ENCODE measurements at regions of chr1 and their contacts with region 1.

Region 1: DNA sequence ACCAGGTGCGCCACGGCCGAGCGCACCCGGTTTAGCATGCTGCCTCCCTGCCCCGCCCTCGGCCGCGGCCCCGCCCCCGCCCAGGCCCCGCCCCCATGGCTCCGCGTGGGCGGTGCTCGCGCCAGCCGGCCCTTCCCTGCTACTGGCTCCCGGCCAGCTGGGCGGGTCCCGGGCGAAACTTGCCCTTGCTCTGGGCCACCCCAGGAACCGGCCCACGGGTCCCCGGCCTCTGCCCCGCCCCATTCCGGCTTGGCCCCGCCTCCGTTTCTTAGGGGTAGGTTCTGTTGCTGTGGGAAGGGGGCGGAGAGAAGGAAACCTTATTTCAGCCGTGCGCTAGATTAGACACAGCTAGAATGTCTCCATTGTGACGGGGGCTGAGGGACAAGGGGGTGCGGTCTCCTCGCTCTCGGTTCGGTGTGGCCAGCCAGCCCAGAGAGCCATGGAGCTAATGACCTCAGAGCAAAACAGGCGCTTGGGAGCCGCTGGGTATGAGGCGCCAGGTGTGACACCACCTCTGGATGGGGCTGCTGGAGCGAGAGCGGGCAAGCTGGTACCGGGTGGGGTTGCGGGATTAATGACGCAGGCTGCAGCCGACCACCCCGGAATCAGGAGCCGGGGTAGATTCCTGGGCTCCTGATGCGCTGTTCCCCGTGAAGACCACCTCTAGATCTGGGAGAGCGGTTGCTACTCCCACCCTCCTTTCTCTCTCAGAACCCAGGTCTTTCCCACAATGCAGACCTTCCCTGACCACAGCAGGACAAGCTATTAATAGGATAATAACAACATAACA is at the start of gene PPM1J:
- DNase-seq: peak; percentile 100
- H3K4me3 ChIP-seq: peak within 1 kb of the TSS; percentile 32 to 61 (median 54)
- H3K27ac ChIP-seq: peak within 1 kb of the TSS; percentile 64 to 80 (median 72)
- H3K4me1 ChIP-seq: peaks cover 0 to 39% (median 27%) of the 10 kb centered on the region in 4 donors
- H3K27me3 ChIP-seq: no peaks in the 10 kb centered on the region
- CTCF ChIP-seq: no peak
- EP300 ChIP-seq: no peak
- POLR2A ChIP-seq: peak; percentile 39
- total RNA-seq, gene PPM1J: 0.68 to 1.7 TPM in 2 of 4 donors, not detected in the others

Region 2: GRCh38 chr1:112619520-112620376 is 95.7 kb before region 1 on chr1 and contains the start of gene CAPZA1:
- in situ Hi-C with region 1: loop called in 1 of 4 experiments (anchors 10 kb)
- intact Hi-C with region 1: no loop called
- DNase-seq: peak; percentile 95
- H3K4me3 ChIP-seq: peak within 1 kb of the TSS; percentile 81 to 98 (median 86)
- H3K27ac ChIP-seq: peak within 1 kb of the TSS; percentile 93 to 98 (median 97)
- H3K4me1 ChIP-seq: peaks cover 16 to 45% (median 35%) of the 10 kb centered on the region in 4 donors
- H3K27me3 ChIP-seq: no peaks in the 10 kb centered on the region
- CTCF ChIP-seq: no peak
- EP300 ChIP-seq: peak; percentile 1
- POLR2A ChIP-seq: peak; percentile 92
- total RNA-seq, gene CAPZA1: 44.2 to 228 (median 123) TPM

Region 3: DNA sequence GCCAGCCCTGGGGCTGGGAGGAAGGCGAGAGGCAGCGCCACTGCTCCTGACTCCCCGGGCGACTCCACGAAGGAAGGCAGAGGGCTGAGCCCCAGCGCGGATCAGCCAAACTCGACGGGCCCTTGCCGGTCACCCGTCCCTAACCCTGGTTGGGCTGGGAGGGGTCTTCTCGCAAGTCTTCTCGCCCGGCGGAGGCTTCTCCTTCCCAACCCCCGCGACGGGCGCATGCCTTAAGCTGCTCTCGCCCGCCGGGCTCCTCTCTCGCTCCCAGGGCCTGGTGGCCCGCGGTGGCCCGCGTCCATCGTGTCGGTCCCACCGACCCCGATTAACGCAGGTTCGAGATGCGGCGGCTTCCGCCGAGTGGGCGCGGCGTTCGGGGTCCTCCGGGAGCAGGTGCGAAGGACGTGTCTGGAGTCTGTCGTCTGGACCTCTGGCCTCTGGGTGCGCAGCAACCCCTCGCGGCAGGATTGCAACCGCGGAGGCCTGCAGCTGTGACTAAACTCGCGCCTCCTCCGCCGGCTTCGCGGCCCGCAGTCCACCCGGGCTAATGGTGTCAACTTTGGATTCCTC is 28.6 kb after region 1 on chr1:
- in situ Hi-C with region 1: no loop called
- intact Hi-C with region 1: no loop called
- DNase-seq: peak; percentile 13
- H3K4me3 ChIP-seq: peak overlapping the region in 2 of 4 donors; percentile 18 to 35
- H3K27ac ChIP-seq: no peak overlapping the region
- H3K4me1 ChIP-seq: peaks cover 0 to 12% (median 10%) of the 10 kb centered on the region in 4 donors
- H3K27me3 ChIP-seq: peaks cover 74% of the 10 kb centered on the region
- CTCF ChIP-seq: peak in 2 of 5 experiments; percentile 30 to 33
- EP300 ChIP-seq: no peak
- POLR2A ChIP-seq: no peak

Region 4: GRCh38 chr1:112762541-112763517 is 47.4 kb after region 1 on chr1:
- in situ Hi-C with region 1: no loop called
- intact Hi-C with region 1: no loop called
- DNase-seq: peak; percentile 7
- H3K4me3 ChIP-seq: no peak overlapping the region
- H3K27ac ChIP-seq: no peak overlapping the region
- H3K4me1 ChIP-seq: no peaks in the 10 kb centered on the region
- H3K27me3 ChIP-seq: peaks cover 9% of the 10 kb centered on the region
- CTCF ChIP-seq: no peak
- EP300 ChIP-seq: no peak
- POLR2A ChIP-seq: no peak

Region 5: GRCh38 chr1:112803906-112804762 is 88.7 kb after region 1 on chr1:
- in situ Hi-C with region 1: loop called in 2 of 4 experiments (anchors 5 to 10 kb)
- intact Hi-C with region 1: loop called (anchors 5 kb)
- DNase-seq: peak; percentile 79
- H3K4me3 ChIP-seq: no peak overlapping the region
- H3K27ac ChIP-seq: no peak overlapping the region
- H3K4me1 ChIP-seq: peaks cover 0 to 2% (median 0%) of the 10 kb centered on the region in 4 donors
- H3K27me3 ChIP-seq: no peaks in the 10 kb centered on the region
- CTCF ChIP-seq: peak; percentile 49 to 78 (median 67)
- EP300 ChIP-seq: no peak
- POLR2A ChIP-seq: no peak

Region 6: GRCh38 chr1:112809253-112809684 is 93.8 kb after region 1 on chr1:
- in situ Hi-C with region 1: loop called in 2 of 4 experiments (anchors 5 to 10 kb)
- intact Hi-C with region 1: loop called (anchors 5 kb)
- DNase-seq: peak; percentile 82
- H3K4me3 ChIP-seq: no peak overlapping the region
- H3K27ac ChIP-seq: no peak overlapping the region
- H3K4me1 ChIP-seq: peaks cover 0 to 7% (median 0%) of the 10 kb centered on the region in 4 donors
- H3K27me3 ChIP-seq: no peaks in the 10 kb centered on the region
- CTCF ChIP-seq: peak; percentile 76 to 84 (median 81)
- EP300 ChIP-seq: no peak
- POLR2A ChIP-seq: no peak

Region 7: GRCh38 chr1:113072757-113073478 is 357.5 kb after region 1 on chr1 and contains the start of gene LRIG2:
- in situ Hi-C with region 1: loop called in 2 of 4 experiments (anchors 10 to 25 kb)
- intact Hi-C with region 1: loop called (anchors 10 kb)
- DNase-seq: peak; percentile 100
- H3K4me3 ChIP-seq: peak within 1 kb of the TSS; percentile 72 to 82 (median 77)
- H3K27ac ChIP-seq: peak within 1 kb of the TSS; percentile 93 to 97 (median 96)
- H3K4me1 ChIP-seq: peaks cover 0 to 32% (median 22%) of the 10 kb centered on the region in 4 donors
- H3K27me3 ChIP-seq: no peaks in the 10 kb centered on the region
- CTCF ChIP-seq: peak in 4 of 5 experiments; percentile 76 to 95 (median 88)
- EP300 ChIP-seq: no peak
- POLR2A ChIP-seq: peak; percentile 93
- total RNA-seq, gene LRIG2: 9.4 to 43.7 (median 27.2) TPM

Measured in transverse colon (tissue), 4 donors.